ENCODE measurements at regions of chr20 and their contacts with region 1.

Region 1: DNA sequence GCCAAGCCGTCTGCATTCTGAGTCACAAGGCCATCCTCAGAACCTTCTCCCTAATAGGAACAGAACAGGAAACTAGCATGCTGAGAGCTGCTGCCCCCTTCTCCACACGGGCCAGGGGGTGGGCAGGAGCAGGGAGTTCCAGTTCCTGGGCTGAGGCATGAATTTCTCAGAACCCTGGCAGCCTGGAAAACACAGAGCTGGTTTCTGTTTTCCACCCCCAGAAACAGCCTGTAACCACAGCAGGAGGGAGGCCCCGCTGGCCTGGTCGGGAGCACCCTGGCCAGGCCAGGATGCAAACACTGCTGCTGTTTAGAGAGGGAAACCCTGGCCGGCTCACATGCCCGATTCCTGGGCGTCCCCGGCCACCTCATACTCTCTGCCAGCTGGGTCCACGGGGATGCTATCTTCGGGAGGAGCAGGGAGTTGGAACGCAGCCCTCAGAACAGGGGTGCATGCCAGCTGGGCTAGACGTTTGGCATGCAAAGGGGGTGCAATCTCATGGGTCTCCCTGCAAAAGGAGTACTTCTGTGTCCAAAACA is 130.1 kb downstream of the NFATC2 start:
- DNase-seq: no peak
- H3K4me3 Mint-ChIP-seq: no peak overlapping the region
- H3K27ac Mint-ChIP-seq: peak overlapping the region; percentile 81
- H3K4me1 Mint-ChIP-seq: peaks cover 91% of the 10 kb centered on the region
- H3K27me3 Mint-ChIP-seq: no peaks in the 10 kb centered on the region

Region 2: DNA sequence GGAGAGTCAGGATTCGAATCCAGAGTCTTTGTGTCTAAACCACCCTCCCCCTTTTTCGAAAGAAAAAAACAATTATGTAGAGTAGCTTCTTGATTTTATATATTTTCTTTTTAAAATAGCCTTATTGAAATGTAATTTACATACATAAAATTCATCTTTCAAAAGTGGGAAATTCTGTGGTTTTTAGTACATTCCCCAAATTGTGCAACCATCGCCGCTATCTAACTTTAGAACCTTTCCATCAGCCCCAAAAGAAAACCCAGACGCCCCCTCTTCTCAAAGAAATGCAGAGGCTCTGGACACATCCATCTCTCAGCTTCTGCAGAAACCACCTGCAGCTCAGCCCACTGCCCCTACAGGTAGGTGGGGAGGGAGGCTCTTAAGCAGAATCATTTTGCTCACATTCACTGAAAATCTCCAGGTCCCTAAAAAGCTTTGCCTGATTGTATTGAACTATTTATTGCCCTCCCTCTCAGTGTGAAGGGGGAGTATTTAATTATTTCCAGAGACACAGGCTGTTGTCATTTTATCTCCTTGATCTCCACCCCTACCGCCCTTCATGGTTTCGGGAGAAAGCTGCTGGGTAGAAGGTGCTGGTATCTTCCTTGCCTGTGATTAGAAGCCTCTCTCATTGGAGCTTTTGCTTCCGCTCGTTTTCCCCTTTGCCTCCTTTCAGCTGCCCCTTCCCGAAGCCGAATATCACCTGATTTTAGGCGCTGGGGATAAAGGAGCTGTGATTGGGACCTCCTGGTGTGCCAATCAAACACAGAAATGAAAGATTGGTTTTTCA is 320.8 kb before region 1 on chr20:
- CTCF ChIA-PET with region 1: no interaction called
- POLR2A ChIA-PET with region 1: no interaction called
- DNase-seq: no peak
- H3K4me3 Mint-ChIP-seq: no peak overlapping the region
- H3K27ac Mint-ChIP-seq: no peak overlapping the region
- H3K4me1 Mint-ChIP-seq: peaks cover 3% of the 10 kb centered on the region
- H3K27me3 Mint-ChIP-seq: peaks cover 53% of the 10 kb centered on the region

Region 3: GRCh38 chr20:51423290-51423667 is 10.9 kb after region 1 on chr20:
- CTCF ChIA-PET with region 1: interaction called, 3 read pairs
- POLR2A ChIA-PET with region 1: interaction called, 26 read pairs
- DNase-seq: peak; percentile 56
- H3K4me3 Mint-ChIP-seq: peak overlapping the region; percentile 53
- H3K27ac Mint-ChIP-seq: peak overlapping the region; percentile 90
- H3K4me1 Mint-ChIP-seq: peaks cover 95% of the 10 kb centered on the region
- H3K27me3 Mint-ChIP-seq: no peaks in the 10 kb centered on the region

Measured in activated CD4-positive, alpha-beta memory T cell treated with anti-CD3 and anti-CD28 coated beads, Interleukin-2, amount 10 ng/mL, durations not matched to agents 7 days and 5 days (primary cell).